Ascending aorta (tissue), 2 donors: ENCODE measurements at regions of chr19 and their contacts with region 1.

Region 1: GRCh38 chr19:13588957-13589833 is 82.9 kb upstream of the CACNA1A start:
- DNase-seq: peak in 1 of 2 donors; percentile 77
- H3K4me3 ChIP-seq: no peak overlapping the region
- H3K27ac ChIP-seq: no peak overlapping the region
- H3K4me1 ChIP-seq: no peaks in the 10 kb centered on the region
- H3K27me3 ChIP-seq: no peaks in the 10 kb centered on the region
- CTCF ChIP-seq: peak; percentile 89 to 97 (median 97)

Region 2: DNA sequence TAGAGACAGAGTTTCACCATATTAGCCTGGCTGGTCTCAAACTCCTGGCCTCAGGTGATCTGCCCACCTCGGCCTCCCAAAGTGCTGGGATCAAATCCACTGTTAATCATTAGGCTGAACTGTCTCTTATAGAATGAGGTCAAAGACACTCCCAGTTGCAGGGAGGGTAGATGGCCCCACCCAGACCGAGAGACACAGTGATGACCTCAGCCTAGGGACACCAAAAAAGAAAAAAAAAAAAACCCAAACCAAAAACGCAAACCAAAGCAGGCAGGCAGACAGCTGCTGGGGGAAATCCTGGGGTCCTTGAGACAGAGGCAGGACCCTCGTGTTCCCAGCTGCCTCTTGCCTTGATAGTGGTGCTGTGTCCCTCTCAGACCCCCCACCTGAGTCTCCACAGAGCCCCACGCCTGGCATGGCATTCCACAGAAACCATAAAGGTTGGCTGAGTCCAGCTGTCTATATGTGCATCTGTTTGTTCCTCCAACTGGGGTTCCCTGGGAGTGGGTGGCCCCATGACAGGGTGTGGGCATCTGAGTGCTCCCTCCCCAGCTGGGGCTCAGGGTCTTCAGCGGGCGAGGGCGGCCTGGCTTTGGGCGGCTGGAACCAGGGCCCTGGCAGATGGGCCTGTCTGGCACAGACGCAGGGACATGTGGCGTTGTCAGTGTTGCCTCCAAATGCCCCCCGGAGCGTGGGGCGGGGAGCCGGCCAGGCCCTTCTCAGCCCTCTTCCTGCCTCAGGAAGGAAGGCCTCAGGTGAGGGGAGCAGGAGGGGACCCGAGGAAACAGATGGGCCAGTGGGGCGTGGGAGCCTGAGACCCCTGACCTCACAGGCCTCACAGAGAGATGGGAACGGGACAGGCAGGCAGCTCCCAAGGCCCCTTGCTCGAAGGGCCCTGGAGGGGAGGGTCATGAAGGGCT is 614.6 kb before region 1 on chr19:
- intact Hi-C with region 1: loop called (anchors 5 kb)
- DNase-seq: no peak
- H3K4me3 ChIP-seq: no peak overlapping the region
- H3K27ac ChIP-seq: no peak overlapping the region
- H3K4me1 ChIP-seq: no peaks in the 10 kb centered on the region
- H3K27me3 ChIP-seq: no peaks in the 10 kb centered on the region
- CTCF ChIP-seq: no peak

Region 3: GRCh38 chr19:13277104-13277809 is 311.9 kb before region 1 on chr19:
- intact Hi-C with region 1: loop called (anchors 1 kb)
- DNase-seq: peak in 1 of 2 donors; percentile 75
- H3K4me3 ChIP-seq: no peak overlapping the region
- H3K27ac ChIP-seq: no peak overlapping the region
- H3K4me1 ChIP-seq: no peaks in the 10 kb centered on the region
- H3K27me3 ChIP-seq: no peaks in the 10 kb centered on the region
- CTCF ChIP-seq: peak; percentile 56 to 81 (median 76)

Region 4: GRCh38 chr19:13881692-13882418 is 292.7 kb after region 1 on chr19:
- intact Hi-C with region 1: no loop called
- DNase-seq: no peak
- H3K4me3 ChIP-seq: no peak overlapping the region
- H3K27ac ChIP-seq: peak overlapping the region; percentile 58 to 81
- H3K4me1 ChIP-seq: peaks cover 6 to 13% of the 10 kb centered on the region in 2 donors
- H3K27me3 ChIP-seq: no peaks in the 10 kb centered on the region
- CTCF ChIP-seq: no peak